H1 (cell line): ENCODE measurements at regions of chr15 and their contacts with region 1.

Region 1: DNA sequence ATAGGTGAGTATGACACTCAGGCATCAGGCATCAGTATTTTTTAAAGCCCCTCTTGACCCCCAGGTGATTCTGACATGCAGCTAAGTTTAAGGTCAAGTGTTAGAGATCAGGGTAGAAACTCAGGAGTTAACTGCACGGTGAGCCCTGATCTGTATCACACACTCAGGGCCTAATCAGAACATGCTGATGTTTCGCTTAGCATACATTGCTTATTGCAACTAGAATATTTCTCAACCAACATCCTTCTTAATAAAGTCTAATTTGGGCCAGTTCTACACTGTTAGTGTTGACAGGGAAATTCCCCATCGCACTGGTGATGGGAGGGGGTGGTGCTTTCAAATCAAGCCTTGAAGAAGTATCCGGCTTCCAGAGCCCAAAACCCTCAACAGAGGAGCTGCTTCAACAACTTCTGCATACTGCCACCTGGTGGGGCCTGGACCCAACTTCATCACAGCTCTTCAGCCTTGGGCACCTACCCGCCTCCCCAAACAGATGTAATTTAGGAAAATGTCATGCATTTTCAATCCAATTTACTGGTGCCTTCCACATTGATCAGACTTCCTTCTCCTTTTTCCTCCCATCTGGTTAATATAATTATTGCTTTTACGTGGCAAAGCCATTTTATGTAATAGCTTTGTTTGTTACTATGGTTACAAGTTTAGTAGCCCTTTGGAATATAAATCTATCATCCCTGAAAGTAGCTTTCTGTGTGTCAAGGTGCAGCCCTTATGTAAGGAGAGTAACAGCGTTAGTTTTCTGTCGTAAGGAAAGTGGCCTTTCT is 312.2 kb downstream of the RORA start:
- DNase-seq: peak; percentile 51 to 87
- H3K4me3 ChIP-seq: no peak overlapping the region
- H3K27ac ChIP-seq: no peak overlapping the region
- H3K4me1 ChIP-seq: peaks cover 0 to 13% (median 7%) of the 10 kb centered on the region in 4 experiments; a peak in 3 of 7 replicates
- H3K27me3 ChIP-seq: no peaks in the 10 kb centered on the region
- CTCF ChIP-seq: peak; percentile 77 to 89 (median 87)
- EP300 ChIP-seq: no peak
- POLR2A ChIP-seq: no peak
- RAD21 ChIP-seq: peak; percentile 90 to 93

Region 2: GRCh38 chr15:60585743-60586708 is 330.8 kb before region 1 on chr15:
- CTCF ChIA-PET with region 1: interaction called, 51 read pairs
- POLR2A ChIA-PET with region 1: no interaction called
- DNase-seq: no peak
- H3K4me3 ChIP-seq: no peak overlapping the region
- H3K27ac ChIP-seq: no peak overlapping the region
- H3K4me1 ChIP-seq: peaks cover 0 to 5% (median 2%) of the 10 kb centered on the region in 4 experiments; a peak in 4 of 7 replicates
- H3K27me3 ChIP-seq: peaks cover 0 to 7% (median 0%) of the 10 kb centered on the region in 4 experiments; a peak in 2 of 7 replicates
- CTCF ChIP-seq: peak; percentile 10 to 78 (median 78)
- EP300 ChIP-seq: no peak
- POLR2A ChIP-seq: no peak
- RAD21 ChIP-seq: peak; percentile 89 to 90

Region 3: DNA sequence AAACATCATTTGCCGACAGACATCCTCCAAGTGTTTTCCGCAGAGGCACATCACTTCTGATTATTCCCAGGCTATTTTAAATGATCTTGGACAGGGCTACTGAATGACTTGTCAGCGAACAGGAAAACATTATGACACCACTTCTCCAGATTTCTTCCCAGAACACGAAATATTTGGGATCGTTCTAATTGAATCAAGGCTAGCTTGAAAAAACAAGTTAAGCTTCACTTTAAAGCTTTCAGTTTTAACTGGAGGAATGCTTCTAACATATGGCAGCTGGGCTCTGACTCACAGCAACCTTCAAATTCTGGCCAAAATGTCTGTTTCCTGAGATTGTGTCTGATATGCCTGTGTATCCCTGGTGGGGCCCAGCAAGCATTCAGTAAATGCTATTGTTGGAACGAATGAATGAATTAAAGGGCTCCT is 311.0 kb before region 1 on chr15:
- CTCF ChIA-PET with region 1: interaction called, 10 read pairs
- POLR2A ChIA-PET with region 1: no interaction called
- DNase-seq: no peak
- H3K4me3 ChIP-seq: no peak overlapping the region
- H3K27ac ChIP-seq: no peak overlapping the region
- H3K4me1 ChIP-seq: no peaks in the 10 kb centered on the region
- H3K27me3 ChIP-seq: no peaks in the 10 kb centered on the region; a peak in 1 of 7 replicates
- CTCF ChIP-seq: no peak
- EP300 ChIP-seq: no peak
- POLR2A ChIP-seq: no peak
- RAD21 ChIP-seq: no peak

Region 4: DNA sequence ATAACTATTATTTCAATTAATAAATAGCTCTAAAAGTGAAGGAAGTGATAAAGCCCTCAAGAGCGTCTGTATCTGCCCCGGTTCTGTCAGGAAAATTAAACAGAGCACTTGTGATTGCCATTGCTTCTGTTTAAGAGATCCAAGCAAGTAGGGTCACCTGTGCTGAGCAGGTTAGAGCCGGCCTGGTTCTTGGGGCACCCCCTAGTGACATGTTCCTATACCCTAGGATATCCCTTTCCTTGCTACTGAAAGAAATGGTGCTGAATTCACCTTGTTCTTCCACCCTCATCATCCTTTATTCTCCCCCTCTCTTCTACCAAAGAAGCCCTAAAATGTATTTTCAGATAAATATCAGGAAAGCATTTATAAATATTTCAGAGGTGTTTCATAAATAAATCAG is 11.3 kb before region 1 on chr15:
- CTCF ChIA-PET with region 1: interaction called, 23 read pairs
- POLR2A ChIA-PET with region 1: no interaction called
- DNase-seq: no peak
- H3K4me3 ChIP-seq: no peak overlapping the region
- H3K27ac ChIP-seq: no peak overlapping the region
- H3K4me1 ChIP-seq: peaks cover 0 to 6% (median 2%) of the 10 kb centered on the region in 4 experiments; a peak in 3 of 7 replicates
- H3K27me3 ChIP-seq: no peaks in the 10 kb centered on the region
- CTCF ChIP-seq: peak; percentile 47 to 52 (median 48)
- EP300 ChIP-seq: no peak
- POLR2A ChIP-seq: no peak
- RAD21 ChIP-seq: peak; percentile 64 to 77

Region 5: GRCh38 chr15:60932051-60932915 is 15.4 kb after region 1 on chr15:
- CTCF ChIA-PET with region 1: interaction called, 28 read pairs
- POLR2A ChIA-PET with region 1: no interaction called
- DNase-seq: no peak
- H3K4me3 ChIP-seq: no peak overlapping the region
- H3K27ac ChIP-seq: no peak overlapping the region
- H3K4me1 ChIP-seq: peaks cover 0 to 9% (median 0%) of the 10 kb centered on the region in 4 experiments; a peak in 4 of 7 replicates
- H3K27me3 ChIP-seq: no peaks in the 10 kb centered on the region
- CTCF ChIP-seq: peak in 2 of 3 experiments; percentile 44 to 45; a peak in 3 of 4 replicates
- EP300 ChIP-seq: no peak
- POLR2A ChIP-seq: no peak
- RAD21 ChIP-seq: peak; percentile 67 to 76

Region 6: DNA sequence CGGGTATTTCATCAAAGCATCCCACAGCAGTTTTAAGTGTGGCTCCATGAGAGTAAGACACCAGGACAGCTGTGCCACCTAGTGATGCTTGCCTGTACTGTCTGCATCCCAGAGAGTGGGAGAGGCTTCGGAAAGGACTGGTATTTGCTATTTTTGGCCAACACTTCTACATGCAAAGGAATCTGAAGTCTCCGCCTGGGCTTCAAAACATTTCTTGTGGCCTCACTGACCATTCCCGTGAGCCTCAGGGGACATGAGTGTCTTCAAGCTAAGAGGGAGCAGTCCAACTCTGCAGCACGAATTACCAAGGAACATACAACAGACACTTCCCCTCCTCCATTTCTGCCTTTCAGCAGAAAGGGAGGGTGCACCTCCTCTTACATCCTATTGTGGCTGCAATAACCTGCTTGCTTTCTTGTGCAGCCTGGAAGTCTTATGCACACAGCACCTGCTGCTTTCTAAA is 134.7 kb after region 1 on chr15:
- CTCF ChIA-PET with region 1: interaction called, 10 read pairs
- POLR2A ChIA-PET with region 1: no interaction called
- DNase-seq: peak in 1 of 2 experiments; percentile 15
- H3K4me3 ChIP-seq: no peak overlapping the region
- H3K27ac ChIP-seq: no peak overlapping the region
- H3K4me1 ChIP-seq: peaks cover 2 to 14% (median 7%) of the 10 kb centered on the region in 4 experiments; a peak in 4 of 7 replicates
- H3K27me3 ChIP-seq: no peaks in the 10 kb centered on the region
- CTCF ChIP-seq: peak; percentile 60 to 72 (median 67)
- EP300 ChIP-seq: no peak
- POLR2A ChIP-seq: no peak
- RAD21 ChIP-seq: peak; percentile 82 to 83